HEK293 (cell line): ENCODE measurements at regions of chr3 and their contacts with region 1.

Region 1: GRCh38 chr3:47394140-47394870 is 13.5 kb downstream of the PTPN23 start:
- H3K4me3 ChIP-seq: no peak overlapping the region
- H3K27ac ChIP-seq: no peak overlapping the region
- H3K4me1 ChIP-seq: peaks cover 2% of the 10 kb centered on the region; the same call in 1 of the 2 replicates
- CTCF ChIP-seq: no peak

Region 2: DNA sequence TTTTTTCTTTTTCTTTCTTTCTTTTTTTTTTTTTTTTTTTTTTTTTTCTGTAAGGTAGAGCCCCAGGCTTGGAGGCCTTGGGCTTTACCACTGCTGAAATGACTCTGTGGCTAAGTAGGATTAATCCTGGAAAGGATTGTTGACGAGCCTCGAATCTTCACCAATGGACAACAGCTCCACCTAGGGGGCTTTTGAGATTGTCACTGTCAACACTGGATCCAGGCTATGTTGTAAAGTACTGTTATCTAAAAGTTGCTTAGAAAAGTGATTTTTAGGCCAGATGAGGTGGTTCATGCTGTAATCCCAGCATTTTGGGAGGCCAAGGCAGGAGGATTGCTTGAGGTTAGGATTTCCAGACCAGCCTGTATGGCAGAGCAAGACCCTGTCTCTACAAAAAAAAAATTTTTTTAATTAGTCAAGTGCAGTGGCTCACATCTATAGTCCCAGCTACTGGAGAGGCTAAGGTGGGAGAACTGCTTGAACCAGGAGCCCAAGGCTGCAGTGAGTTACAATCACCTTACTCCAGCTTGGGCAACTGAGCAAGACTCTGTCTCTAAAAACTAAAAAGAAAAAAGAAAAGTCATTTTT is 69.9 kb before region 1 on chr3:
- CTCF ChIA-PET with region 1: no interaction called
- POLR2A ChIA-PET with region 1: no interaction called
- H3K4me3 ChIP-seq: no peak overlapping the region
- H3K27ac ChIP-seq: no peak overlapping the region
- H3K4me1 ChIP-seq: no peaks in the 10 kb centered on the region
- CTCF ChIP-seq: peak; percentile 24; the same call in 1 of the 2 replicates

Region 3: DNA sequence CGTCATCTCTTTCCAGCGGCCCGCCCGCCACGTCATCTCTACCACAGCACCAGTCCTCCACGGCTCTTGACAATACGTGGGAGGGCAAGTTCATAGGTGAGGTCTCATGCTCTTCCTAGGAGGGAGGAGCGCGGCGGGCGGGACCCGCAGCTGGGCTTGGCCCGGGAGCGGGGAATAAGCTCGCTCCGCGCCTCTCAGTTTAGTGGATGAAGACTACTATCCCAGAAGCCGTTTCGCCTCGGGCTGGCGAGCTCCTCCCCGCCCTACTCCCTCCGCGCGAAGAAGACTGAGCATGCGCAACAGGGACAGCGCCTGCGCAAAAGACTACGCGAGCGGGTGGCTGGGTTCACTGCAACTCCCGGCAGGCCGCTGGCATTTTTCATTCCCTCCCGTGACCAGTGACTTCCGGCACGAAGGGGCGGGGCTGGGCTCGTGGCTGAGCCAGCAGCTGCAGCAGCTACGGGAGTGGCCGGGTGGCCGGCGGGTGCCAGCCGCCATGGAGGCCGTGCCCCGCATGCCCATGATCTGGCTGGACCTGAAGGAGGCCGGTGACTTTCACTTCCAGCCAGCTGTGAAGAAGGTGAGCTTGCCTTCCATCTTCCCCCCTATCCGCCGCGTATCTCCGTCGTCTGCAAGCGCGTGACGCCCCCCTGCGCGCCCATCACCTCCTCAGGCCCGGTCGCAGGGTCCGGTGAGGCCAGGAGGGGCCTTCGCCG is 13.5 kb before region 1 on chr3 and contains the start of gene PTPN23:
- CTCF ChIA-PET with region 1: no interaction called
- POLR2A ChIA-PET with region 1: interaction called, 13 read pairs
- H3K4me3 ChIP-seq: peak within 1 kb of the TSS; percentile 95
- H3K27ac ChIP-seq: peak within 1 kb of the TSS; percentile 76
- H3K4me1 ChIP-seq: no peaks in the 10 kb centered on the region
- CTCF ChIP-seq: no peak